CD8-positive, alpha-beta T cell (primary cell): ENCODE measurements at regions of chr5 and their contacts with region 1.

Region 1: DNA sequence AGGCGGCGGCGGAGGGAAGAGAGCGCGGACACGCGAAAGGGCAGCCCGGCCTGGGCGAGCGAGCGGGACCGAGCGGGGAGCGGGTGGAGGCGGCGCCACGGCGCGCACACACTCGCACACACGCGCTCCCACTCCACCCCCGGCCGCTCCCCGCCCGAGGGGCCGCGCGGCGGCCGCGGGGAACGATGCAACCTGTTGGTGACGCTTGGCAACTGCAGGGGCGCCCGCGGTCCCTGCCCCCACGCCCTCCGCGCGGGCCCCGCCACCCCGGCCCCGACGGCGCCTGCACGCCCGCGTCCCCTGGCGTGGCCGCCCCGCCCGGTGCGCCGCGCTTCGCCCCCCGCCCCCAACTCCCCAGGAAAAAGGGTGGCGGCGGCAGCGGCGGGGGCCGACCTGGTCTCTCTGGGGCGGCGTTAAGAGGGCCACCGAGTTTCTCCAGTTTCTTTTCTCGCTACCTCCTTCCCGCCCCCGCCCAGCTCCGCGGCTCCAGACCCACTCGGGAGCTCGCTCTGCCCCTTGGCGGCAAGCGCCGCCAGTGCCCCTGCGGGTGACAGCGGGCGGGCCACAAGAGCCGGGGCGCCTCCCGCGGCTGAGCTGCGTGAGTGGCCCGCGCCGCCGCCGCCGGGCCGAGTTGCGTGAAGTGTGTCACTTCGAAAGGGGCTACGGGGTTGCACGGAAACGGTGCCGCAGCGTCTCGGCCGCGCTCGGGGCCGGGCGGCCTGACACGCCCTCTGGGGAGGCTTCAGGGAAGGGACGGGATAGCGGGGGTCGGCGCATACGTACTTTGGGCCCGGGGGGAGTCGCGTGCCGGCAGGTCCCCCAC is at the start of gene NR3C1:
- DNase-seq: peak; percentile 77 to 96 (median 88)
- ATAC-seq: peak; percentile 67
- H3K4me3 ChIP-seq: peak within 1 kb of the TSS; percentile 74 to 94
- H3K4me3 Mint-ChIP-seq: peak within 1 kb of the TSS; percentile 95
- H3K27ac ChIP-seq: peak within 1 kb of the TSS; percentile 83 to 93
- H3K27ac Mint-ChIP-seq: peak within 1 kb of the TSS; percentile 97
- H3K4me1 ChIP-seq: peaks cover 35% of the 10 kb centered on the region
- H3K4me1 Mint-ChIP-seq: peaks cover 39% of the 10 kb centered on the region
- H3K27me3 ChIP-seq: no peaks in the 10 kb centered on the region
- H3K27me3 Mint-ChIP-seq: no peaks in the 10 kb centered on the region
- CTCF ChIP-seq: peak; percentile 65
- total RNA-seq, gene NR3C1: 179 to 181 TPM

Region 2: DNA sequence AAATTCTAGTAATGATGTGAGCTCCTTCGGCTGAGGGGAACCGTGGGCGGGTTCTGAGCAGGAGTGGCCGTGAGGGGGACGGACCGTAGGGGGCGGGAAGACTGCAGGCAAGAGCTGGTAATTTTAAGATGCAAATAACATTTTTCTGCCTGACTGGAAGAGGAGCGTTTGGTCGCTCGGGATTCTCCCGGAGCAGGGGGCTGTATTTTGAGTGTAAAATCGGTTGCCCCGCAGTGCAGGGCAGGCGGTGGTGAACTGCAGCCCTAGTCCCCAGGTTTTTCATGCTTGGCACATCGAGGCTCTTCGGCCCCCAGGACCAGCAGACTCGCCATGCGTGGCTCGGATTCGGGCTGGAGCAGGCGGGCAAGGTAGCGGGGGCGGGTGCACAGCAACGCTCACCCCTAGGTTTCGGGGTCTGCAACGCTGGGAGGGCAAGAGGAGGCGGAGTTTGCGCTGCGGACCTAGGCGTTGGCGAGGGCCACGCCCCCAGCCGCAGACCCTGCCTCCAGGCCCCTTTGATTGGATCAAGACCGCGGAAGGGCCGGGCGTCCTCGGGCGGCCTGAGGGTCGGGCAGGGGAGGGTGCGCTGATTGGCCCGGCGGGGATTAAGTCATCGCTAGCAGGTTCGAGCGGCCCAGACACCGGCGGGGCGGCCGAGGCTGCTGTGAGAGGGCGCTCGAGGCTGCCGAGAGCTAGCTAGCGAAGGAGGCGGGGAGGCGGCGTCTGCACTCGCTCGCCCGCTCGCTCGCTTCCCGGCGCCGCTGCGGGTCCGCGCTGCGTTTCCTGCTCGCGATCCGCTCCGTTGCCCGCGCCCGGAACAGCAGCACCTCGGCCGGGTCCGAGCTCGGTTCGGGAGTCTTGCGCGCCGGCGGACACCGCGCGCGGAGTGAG is 633.8 kb before region 1 on chr5 and contains the start of gene ARHGAP26:
- CTCF ChIA-PET with region 1: no interaction called
- POLR2A ChIA-PET with region 1: interaction called, 3 read pairs
- intact Hi-C with region 1: loop called in 1 of 2 experiments (anchors 1 kb)
- DNase-seq: peak; percentile 87 to 97 (median 92)
- ATAC-seq: peak; percentile 85
- H3K4me3 ChIP-seq: peak within 1 kb of the TSS; percentile 96 to 98
- H3K4me3 Mint-ChIP-seq: peak within 1 kb of the TSS; percentile 95
- H3K27ac ChIP-seq: peak within 1 kb of the TSS; percentile 74 to 78
- H3K27ac Mint-ChIP-seq: peak within 1 kb of the TSS; percentile 93
- H3K4me1 ChIP-seq: peaks cover 27% of the 10 kb centered on the region
- H3K4me1 Mint-ChIP-seq: peaks cover 45% of the 10 kb centered on the region
- H3K27me3 ChIP-seq: no peaks in the 10 kb centered on the region
- H3K27me3 Mint-ChIP-seq: no peaks in the 10 kb centered on the region
- CTCF ChIP-seq: no peak
- total RNA-seq, gene ARHGAP26: 46.0 to 46.6 TPM

Region 3: GRCh38 chr5:142881076-142881783 is 522.6 kb before region 1 on chr5:
- CTCF ChIA-PET with region 1: no interaction called
- POLR2A ChIA-PET with region 1: no interaction called
- intact Hi-C with region 1: no loop called
- DNase-seq: peak in 1 of 9 experiments; percentile 39
- ATAC-seq: no peak
- H3K4me3 ChIP-seq: no peak overlapping the region
- H3K4me3 Mint-ChIP-seq: no peak overlapping the region
- H3K27ac ChIP-seq: no peak overlapping the region
- H3K27ac Mint-ChIP-seq: no peak overlapping the region
- H3K4me1 ChIP-seq: no peaks in the 10 kb centered on the region
- H3K4me1 Mint-ChIP-seq: peaks cover 6% of the 10 kb centered on the region
- H3K27me3 ChIP-seq: no peaks in the 10 kb centered on the region
- H3K27me3 Mint-ChIP-seq: no peaks in the 10 kb centered on the region
- CTCF ChIP-seq: no peak

Region 4: DNA sequence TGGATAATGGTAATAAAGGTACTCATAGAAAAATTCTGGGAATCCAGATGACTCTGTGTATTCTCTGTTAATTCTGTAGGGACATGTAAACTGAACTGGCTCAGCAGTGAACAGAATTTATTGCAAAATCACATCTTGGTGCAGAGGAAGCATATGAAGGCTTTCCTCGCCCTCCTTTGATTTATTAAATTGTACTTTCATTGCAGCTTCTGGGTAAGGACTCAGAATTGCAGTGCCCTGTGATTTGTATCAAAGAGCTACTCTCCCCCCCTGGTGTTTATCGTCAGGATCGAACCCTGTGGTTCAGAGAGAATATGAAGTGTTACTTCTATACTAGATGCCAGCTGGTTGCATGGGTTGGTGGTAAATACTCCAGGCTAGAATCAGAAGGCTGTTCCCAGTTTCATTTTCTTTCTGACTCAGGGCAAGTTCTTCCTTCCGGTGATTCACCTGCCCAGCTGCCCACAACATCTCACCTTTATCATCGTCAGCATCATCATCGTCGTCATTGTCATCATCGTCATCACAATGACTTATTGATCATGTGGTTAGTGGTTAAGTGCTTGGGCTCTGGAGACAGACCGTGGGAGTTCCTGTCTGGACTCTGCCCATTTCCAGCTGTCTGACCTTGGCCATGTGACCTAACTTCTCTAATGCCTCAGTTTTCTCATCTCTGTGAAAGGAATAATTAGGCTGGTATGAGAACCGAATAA is 394.8 kb before region 1 on chr5:
- CTCF ChIA-PET with region 1: interaction called, 4 read pairs
- POLR2A ChIA-PET with region 1: interaction called, 5 read pairs
- intact Hi-C with region 1: loop called in 1 of 2 experiments (anchors 1 kb)
- DNase-seq: peak; percentile 56 to 98 (median 63)
- ATAC-seq: peak; percentile 87
- H3K4me3 ChIP-seq: no peak overlapping the region
- H3K4me3 Mint-ChIP-seq: no peak overlapping the region
- H3K27ac ChIP-seq: peak overlapping the region; percentile 33 to 96
- H3K27ac Mint-ChIP-seq: peak overlapping the region; percentile 84
- H3K4me1 ChIP-seq: peaks cover 23% of the 10 kb centered on the region
- H3K4me1 Mint-ChIP-seq: peaks cover 46% of the 10 kb centered on the region
- H3K27me3 ChIP-seq: no peaks in the 10 kb centered on the region
- H3K27me3 Mint-ChIP-seq: no peaks in the 10 kb centered on the region
- CTCF ChIP-seq: no peak

Region 5: GRCh38 chr5:143134900-143135299 is 268.9 kb before region 1 on chr5:
- CTCF ChIA-PET with region 1: no interaction called
- POLR2A ChIA-PET with region 1: no interaction called
- intact Hi-C with region 1: no loop called
- DNase-seq: no peak
- ATAC-seq: no peak
- H3K4me3 ChIP-seq: no peak overlapping the region
- H3K4me3 Mint-ChIP-seq: no peak overlapping the region
- H3K27ac ChIP-seq: no peak overlapping the region
- H3K27ac Mint-ChIP-seq: no peak overlapping the region
- H3K4me1 ChIP-seq: no peaks in the 10 kb centered on the region
- H3K4me1 Mint-ChIP-seq: no peaks in the 10 kb centered on the region
- H3K27me3 ChIP-seq: no peaks in the 10 kb centered on the region
- H3K27me3 Mint-ChIP-seq: no peaks in the 10 kb centered on the region
- CTCF ChIP-seq: no peak

Region 6: DNA sequence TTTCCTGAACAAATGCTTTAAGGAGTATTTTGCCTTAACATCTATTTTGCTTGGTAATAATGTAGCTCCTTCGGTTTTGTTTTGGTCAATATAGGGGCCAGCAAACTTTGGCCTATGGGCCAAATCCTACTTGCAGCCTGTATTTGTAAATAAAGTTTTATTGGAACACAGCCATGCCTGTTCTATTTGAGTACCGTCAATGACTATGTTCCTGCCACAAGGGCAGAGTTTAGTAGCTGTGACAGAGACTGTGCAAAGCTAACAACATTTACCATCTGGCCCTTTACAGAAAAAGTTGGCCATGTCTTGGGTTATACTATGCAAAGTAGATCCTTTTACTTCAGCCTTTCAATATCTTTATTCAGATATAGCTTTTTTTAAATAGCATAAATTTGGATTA is 113.7 kb before region 1 on chr5:
- CTCF ChIA-PET with region 1: no interaction called
- POLR2A ChIA-PET with region 1: interaction called, 4 read pairs
- intact Hi-C with region 1: loop called (anchors 5 kb)
- DNase-seq: no peak
- ATAC-seq: no peak
- H3K4me3 ChIP-seq: no peak overlapping the region
- H3K4me3 Mint-ChIP-seq: no peak overlapping the region
- H3K27ac ChIP-seq: no peak overlapping the region
- H3K27ac Mint-ChIP-seq: no peak overlapping the region
- H3K4me1 ChIP-seq: no peaks in the 10 kb centered on the region
- H3K4me1 Mint-ChIP-seq: peaks cover 9% of the 10 kb centered on the region
- H3K27me3 ChIP-seq: no peaks in the 10 kb centered on the region
- H3K27me3 Mint-ChIP-seq: no peaks in the 10 kb centered on the region
- CTCF ChIP-seq: no peak

Region 7: GRCh38 chr5:143355720-143356119 is 48.1 kb before region 1 on chr5:
- CTCF ChIA-PET with region 1: interaction called, 5 read pairs
- POLR2A ChIA-PET with region 1: interaction called, 13 read pairs
- intact Hi-C with region 1: loop called (anchors 2 kb)
- DNase-seq: peak; percentile 31 to 90 (median 67)
- ATAC-seq: peak; percentile 83
- H3K4me3 ChIP-seq: no peak overlapping the region
- H3K4me3 Mint-ChIP-seq: peak overlapping the region; percentile 2
- H3K27ac ChIP-seq: peak overlapping the region in 1 of 2 experiments; percentile 7
- H3K27ac Mint-ChIP-seq: peak overlapping the region; percentile 74
- H3K4me1 ChIP-seq: peaks cover 57% of the 10 kb centered on the region
- H3K4me1 Mint-ChIP-seq: peaks cover 79% of the 10 kb centered on the region
- H3K27me3 ChIP-seq: no peaks in the 10 kb centered on the region
- H3K27me3 Mint-ChIP-seq: no peaks in the 10 kb centered on the region
- CTCF ChIP-seq: no peak

Region 8: DNA sequence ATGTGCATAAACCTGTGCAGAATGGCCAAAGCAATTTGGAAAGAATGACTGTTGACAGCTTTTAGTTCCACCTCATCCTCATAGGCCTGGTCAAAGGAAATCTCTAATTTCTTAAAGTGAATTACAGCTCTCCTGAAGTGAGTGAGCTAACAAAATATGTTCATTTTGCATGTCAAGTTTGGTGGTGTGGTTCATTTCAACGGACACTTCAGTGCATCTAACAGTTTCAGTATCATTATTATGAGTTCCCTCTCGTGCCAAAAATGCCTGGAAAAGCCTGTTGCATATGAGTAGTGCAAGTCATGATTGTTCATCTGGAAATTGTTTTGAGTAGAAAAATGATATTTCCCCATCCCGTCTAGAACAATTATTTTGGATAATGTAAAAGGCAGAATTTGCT is 354.9 kb after region 1 on chr5:
- CTCF ChIA-PET with region 1: no interaction called
- POLR2A ChIA-PET with region 1: no interaction called
- intact Hi-C with region 1: no loop called
- DNase-seq: no peak
- ATAC-seq: no peak
- H3K4me3 ChIP-seq: no peak overlapping the region
- H3K4me3 Mint-ChIP-seq: no peak overlapping the region
- H3K27ac ChIP-seq: no peak overlapping the region
- H3K27ac Mint-ChIP-seq: no peak overlapping the region
- H3K4me1 ChIP-seq: no peaks in the 10 kb centered on the region
- H3K4me1 Mint-ChIP-seq: no peaks in the 10 kb centered on the region
- H3K27me3 ChIP-seq: no peaks in the 10 kb centered on the region
- H3K27me3 Mint-ChIP-seq: no peaks in the 10 kb centered on the region
- CTCF ChIP-seq: no peak

Region 9: GRCh38 chr5:143824851-143825720 is 421.3 kb after region 1 on chr5:
- CTCF ChIA-PET with region 1: interaction called, 3 read pairs
- POLR2A ChIA-PET with region 1: interaction called, 4 read pairs
- intact Hi-C with region 1: loop called (anchors 2 to 10 kb)
- DNase-seq: peak; percentile 64 to 90 (median 85)
- ATAC-seq: peak; percentile 98
- H3K4me3 ChIP-seq: no peak overlapping the region
- H3K4me3 Mint-ChIP-seq: no peak overlapping the region
- H3K27ac ChIP-seq: no peak overlapping the region
- H3K27ac Mint-ChIP-seq: no peak overlapping the region
- H3K4me1 ChIP-seq: no peaks in the 10 kb centered on the region
- H3K4me1 Mint-ChIP-seq: peaks cover 9% of the 10 kb centered on the region
- H3K27me3 ChIP-seq: no peaks in the 10 kb centered on the region
- H3K27me3 Mint-ChIP-seq: peaks cover 2% of the 10 kb centered on the region
- CTCF ChIP-seq: peak; percentile 95

Region 10: GRCh38 chr5:144072518-144072927 is 668.7 kb after region 1 on chr5:
- CTCF ChIA-PET with region 1: no interaction called
- POLR2A ChIA-PET with region 1: no interaction called
- intact Hi-C with region 1: no loop called
- DNase-seq: no peak
- ATAC-seq: no peak
- H3K4me3 ChIP-seq: no peak overlapping the region
- H3K4me3 Mint-ChIP-seq: no peak overlapping the region
- H3K27ac ChIP-seq: no peak overlapping the region
- H3K27ac Mint-ChIP-seq: no peak overlapping the region
- H3K4me1 ChIP-seq: no peaks in the 10 kb centered on the region
- H3K4me1 Mint-ChIP-seq: no peaks in the 10 kb centered on the region
- H3K27me3 ChIP-seq: no peaks in the 10 kb centered on the region
- H3K27me3 Mint-ChIP-seq: peaks cover 6% of the 10 kb centered on the region
- CTCF ChIP-seq: no peak